ENCODE measurements at regions of chr10 and their contacts with region 1.

Region 1: GRCh38 chr10:60032723-60033122 is 126.4 kb upstream of the CCDC6 start:
- DNase-seq: peak; percentile 47
- ATAC-seq: peak; percentile 85
- H3K4me3 ChIP-seq: no peak overlapping the region
- H3K27ac ChIP-seq: no peak overlapping the region
- H3K4me1 ChIP-seq: no peaks in the 10 kb centered on the region
- H3K27me3 ChIP-seq: no peaks in the 10 kb centered on the region
- CTCF ChIP-seq: peak; percentile 68 to 87 (median 75)
- POLR2A ChIP-seq: no peak
- RAD21 ChIP-seq: peak; percentile 91

Region 2: GRCh38 chr10:59830601-59831259 is 202.0 kb before region 1 on chr10:
- CTCF ChIA-PET with region 1: interaction called, 7 read pairs
- POLR2A ChIA-PET with region 1: no interaction called
- RAD21 ChIA-PET with region 1: no interaction called
- intact Hi-C with region 1: loop called (anchors 1 kb)
- DNase-seq: peak; percentile 34
- ATAC-seq: peak; percentile 90
- H3K4me3 ChIP-seq: no peak overlapping the region
- H3K27ac ChIP-seq: no peak overlapping the region
- H3K4me1 ChIP-seq: no peaks in the 10 kb centered on the region
- H3K27me3 ChIP-seq: no peaks in the 10 kb centered on the region
- CTCF ChIP-seq: peak; percentile 59 to 92 (median 86); a peak in 5 of 6 replicates
- POLR2A ChIP-seq: no peak
- RAD21 ChIP-seq: peak; percentile 56

Region 3: DNA sequence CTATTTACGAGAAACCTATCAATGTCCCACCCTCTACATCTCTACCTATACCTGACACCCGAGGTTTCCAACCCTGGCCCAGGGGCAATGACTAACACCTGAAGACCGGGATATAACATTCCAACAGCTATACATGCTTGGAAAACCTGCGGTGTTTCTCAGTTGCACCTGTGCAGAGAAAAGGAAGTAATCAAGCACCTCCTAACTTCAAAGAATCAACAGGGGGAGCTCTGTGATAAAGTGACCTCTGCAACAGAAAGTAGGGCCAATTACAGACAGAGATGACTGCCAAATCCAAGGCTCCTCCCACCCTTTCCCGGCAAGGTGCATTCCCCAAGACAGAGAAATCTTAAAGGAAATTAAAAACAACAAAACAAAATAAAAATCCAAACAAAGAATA is 167.6 kb before region 1 on chr10:
- CTCF ChIA-PET with region 1: interaction called, 3 read pairs
- POLR2A ChIA-PET with region 1: no interaction called
- RAD21 ChIA-PET with region 1: interaction called in 1 of 2 experiments, 4 read pairs
- intact Hi-C with region 1: loop called (anchors 5 kb)
- DNase-seq: peak; percentile 40
- ATAC-seq: peak; percentile 91
- H3K4me3 ChIP-seq: no peak overlapping the region
- H3K27ac ChIP-seq: no peak overlapping the region
- H3K4me1 ChIP-seq: peaks cover 5 to 16% of the 10 kb centered on the region in 2 experiments; a peak in 2 of 4 replicates
- H3K27me3 ChIP-seq: no peaks in the 10 kb centered on the region
- CTCF ChIP-seq: peak; percentile 38 to 50 (median 39); a peak in 4 of 6 replicates
- POLR2A ChIP-seq: no peak
- RAD21 ChIP-seq: peak; percentile 73

Region 4: DNA sequence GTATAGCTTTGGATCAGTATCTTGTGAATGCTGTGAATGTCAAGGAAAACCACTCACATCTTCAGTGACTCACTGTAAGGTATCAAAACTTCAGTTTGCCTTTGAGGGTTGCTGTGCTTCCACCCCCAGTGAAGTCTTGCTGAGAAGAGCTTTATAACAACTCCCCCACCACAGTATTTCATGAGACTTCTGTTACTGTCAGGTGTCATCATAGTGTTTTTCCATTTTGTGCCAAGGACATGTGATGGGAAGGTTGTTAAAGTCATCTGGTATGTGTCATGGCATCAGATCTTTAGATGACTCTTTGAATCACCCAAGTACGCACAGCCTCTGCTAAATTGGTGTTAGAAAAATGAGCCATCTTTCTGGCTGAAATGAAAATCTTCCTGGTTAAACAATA is 11.4 kb before region 1 on chr10:
- CTCF ChIA-PET with region 1: no interaction called
- POLR2A ChIA-PET with region 1: no interaction called
- RAD21 ChIA-PET with region 1: no interaction called
- intact Hi-C with region 1: no loop called
- DNase-seq: no peak
- ATAC-seq: no peak
- H3K4me3 ChIP-seq: no peak overlapping the region
- H3K27ac ChIP-seq: no peak overlapping the region
- H3K4me1 ChIP-seq: no peaks in the 10 kb centered on the region
- H3K27me3 ChIP-seq: no peaks in the 10 kb centered on the region
- CTCF ChIP-seq: no peak
- POLR2A ChIP-seq: no peak
- RAD21 ChIP-seq: no peak

Measured in HCT116 (cell line).